Activated naive CD4-positive, alpha-beta T cell treated with anti-CD3 and anti-CD28 coated beads for 36 hours (primary cell): ENCODE measurements at regions of chr12 and their contacts with region 1.

Region 1: DNA sequence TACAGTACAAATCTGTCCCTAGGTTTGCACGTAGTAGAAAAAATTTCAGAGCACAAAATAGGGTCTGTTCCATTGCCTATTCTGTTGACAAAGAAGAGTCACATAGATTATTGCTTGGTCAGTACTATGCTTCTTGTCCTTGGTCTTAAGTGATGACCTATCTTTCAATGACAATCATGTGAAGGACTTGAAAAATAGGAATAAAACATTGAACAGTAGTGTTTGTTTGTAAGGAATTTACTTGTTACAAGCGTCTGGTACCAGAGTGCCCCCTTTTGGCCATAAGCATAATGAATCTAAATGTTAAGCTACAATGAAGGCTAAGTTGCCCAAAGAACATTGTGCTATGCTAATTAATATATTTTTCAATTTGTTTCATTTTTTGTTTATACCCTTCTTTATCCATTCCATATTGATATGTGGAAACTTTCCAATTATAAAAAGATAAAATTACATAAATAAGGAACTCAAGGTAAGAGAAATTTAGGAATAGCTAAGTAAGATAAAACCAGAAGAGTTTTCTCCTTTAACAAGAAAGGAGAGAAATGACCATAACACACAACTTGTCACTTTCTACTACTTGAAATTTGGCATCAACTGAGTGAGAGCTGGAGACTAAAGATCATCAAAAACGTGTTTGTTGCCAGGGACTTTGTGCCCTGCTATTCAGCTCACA is 204.7 kb downstream of the EPS8 start:
- DNase-seq: peak; percentile 58
- H3K4me3 Mint-ChIP-seq: no peak overlapping the region
- H3K27ac Mint-ChIP-seq: no peak overlapping the region
- H3K4me1 Mint-ChIP-seq: peaks cover 12% of the 10 kb centered on the region
- H3K27me3 Mint-ChIP-seq: no peaks in the 10 kb centered on the region

Region 2: GRCh38 chr12:15227004-15227679 is 357.4 kb before region 1 on chr12:
- CTCF ChIA-PET with region 1: no interaction called
- intact Hi-C with region 1: loop called (anchors 2 kb)
- DNase-seq: peak; percentile 56
- H3K4me3 Mint-ChIP-seq: no peak overlapping the region
- H3K27ac Mint-ChIP-seq: no peak overlapping the region
- H3K4me1 Mint-ChIP-seq: no peaks in the 10 kb centered on the region
- H3K27me3 Mint-ChIP-seq: peaks cover 18% of the 10 kb centered on the region

Region 3: DNA sequence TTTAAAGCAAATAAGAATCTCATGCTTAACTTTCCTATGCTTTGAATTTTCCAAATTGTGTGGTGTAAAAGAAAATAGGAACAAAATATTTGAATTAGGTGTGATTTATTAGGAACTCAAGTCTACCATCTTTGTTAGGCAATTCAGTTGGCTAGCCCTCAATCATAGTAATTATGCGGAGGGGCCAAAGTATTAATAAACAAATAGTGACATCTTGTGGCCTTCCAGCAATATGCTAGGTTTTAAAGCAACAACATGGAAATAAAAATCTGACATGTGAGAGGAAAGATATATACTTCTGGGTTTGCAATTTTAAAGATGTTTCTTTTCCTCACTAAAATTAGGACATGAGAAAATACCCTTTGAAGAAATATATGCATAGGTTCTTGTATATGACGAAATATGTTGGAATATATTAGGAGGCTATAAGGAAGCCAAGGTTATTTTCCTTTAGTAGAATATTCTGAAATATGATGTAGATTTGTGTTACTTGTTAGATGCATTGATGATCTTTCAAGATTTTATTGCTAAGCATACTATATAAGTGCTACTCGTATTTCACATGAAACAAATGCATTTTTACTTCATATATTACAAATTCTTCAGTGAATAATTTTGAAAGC is 61.8 kb before region 1 on chr12:
- CTCF ChIA-PET with region 1: interaction called, 460 read pairs
- intact Hi-C with region 1: no loop called
- DNase-seq: no peak
- H3K4me3 Mint-ChIP-seq: no peak overlapping the region
- H3K27ac Mint-ChIP-seq: no peak overlapping the region
- H3K4me1 Mint-ChIP-seq: peaks cover 4% of the 10 kb centered on the region
- H3K27me3 Mint-ChIP-seq: peaks cover 14% of the 10 kb centered on the region

Region 4: DNA sequence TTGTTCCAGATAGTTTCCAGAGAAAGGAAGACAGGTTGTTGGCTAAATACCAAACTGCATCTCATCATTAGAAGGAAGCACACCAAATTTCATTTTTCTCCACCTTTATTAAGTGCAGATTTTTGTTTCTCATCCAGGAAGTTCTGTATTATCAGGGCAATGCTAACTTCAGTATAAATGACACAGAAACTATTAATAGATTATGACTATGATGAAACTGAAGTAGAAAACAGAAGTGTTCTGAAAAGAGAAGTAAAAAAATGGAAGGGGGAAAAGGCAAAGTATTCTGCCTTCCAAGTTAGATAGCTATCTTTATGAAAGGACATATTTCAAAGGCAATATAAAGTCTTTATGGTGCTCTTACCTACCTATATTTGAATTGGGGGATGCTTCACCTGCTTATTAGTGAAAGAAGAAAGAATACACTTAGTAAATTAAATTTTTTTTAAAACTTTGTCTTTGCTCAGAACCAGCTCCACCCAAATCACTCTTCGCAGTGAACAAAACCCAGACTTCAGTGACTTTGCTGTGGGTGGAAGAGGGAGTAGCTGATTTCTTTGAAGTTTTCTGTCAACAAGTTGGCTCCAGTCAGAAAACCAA is 38.3 kb before region 1 on chr12:
- CTCF ChIA-PET with region 1: interaction called, 13 read pairs
- intact Hi-C with region 1: no loop called
- DNase-seq: peak; percentile 38
- H3K4me3 Mint-ChIP-seq: no peak overlapping the region
- H3K27ac Mint-ChIP-seq: peak overlapping the region; percentile 79
- H3K4me1 Mint-ChIP-seq: peaks cover 64% of the 10 kb centered on the region
- H3K27me3 Mint-ChIP-seq: no peaks in the 10 kb centered on the region

Region 5: GRCh38 chr12:15563663-15564062 is 20.8 kb before region 1 on chr12:
- CTCF ChIA-PET with region 1: interaction called, 21 read pairs
- intact Hi-C with region 1: no loop called
- DNase-seq: peak; percentile 67
- H3K4me3 Mint-ChIP-seq: peak overlapping the region; percentile 58
- H3K27ac Mint-ChIP-seq: peak overlapping the region; percentile 90
- H3K4me1 Mint-ChIP-seq: peaks cover 81% of the 10 kb centered on the region
- H3K27me3 Mint-ChIP-seq: no peaks in the 10 kb centered on the region

Region 6: GRCh38 chr12:15682826-15683225 is 98.3 kb after region 1 on chr12:
- CTCF ChIA-PET with region 1: no interaction called
- intact Hi-C with region 1: no loop called
- DNase-seq: no peak
- H3K4me3 Mint-ChIP-seq: no peak overlapping the region
- H3K27ac Mint-ChIP-seq: no peak overlapping the region
- H3K4me1 Mint-ChIP-seq: no peaks in the 10 kb centered on the region
- H3K27me3 Mint-ChIP-seq: no peaks in the 10 kb centered on the region

Region 7: GRCh38 chr12:15856097-15856982 is 271.8 kb after region 1 on chr12:
- CTCF ChIA-PET with region 1: interaction called, 76 read pairs
- intact Hi-C with region 1: no loop called
- DNase-seq: peak; percentile 66
- H3K4me3 Mint-ChIP-seq: no peak overlapping the region
- H3K27ac Mint-ChIP-seq: no peak overlapping the region
- H3K4me1 Mint-ChIP-seq: no peaks in the 10 kb centered on the region
- H3K27me3 Mint-ChIP-seq: peaks cover 3% of the 10 kb centered on the region

Region 8: DNA sequence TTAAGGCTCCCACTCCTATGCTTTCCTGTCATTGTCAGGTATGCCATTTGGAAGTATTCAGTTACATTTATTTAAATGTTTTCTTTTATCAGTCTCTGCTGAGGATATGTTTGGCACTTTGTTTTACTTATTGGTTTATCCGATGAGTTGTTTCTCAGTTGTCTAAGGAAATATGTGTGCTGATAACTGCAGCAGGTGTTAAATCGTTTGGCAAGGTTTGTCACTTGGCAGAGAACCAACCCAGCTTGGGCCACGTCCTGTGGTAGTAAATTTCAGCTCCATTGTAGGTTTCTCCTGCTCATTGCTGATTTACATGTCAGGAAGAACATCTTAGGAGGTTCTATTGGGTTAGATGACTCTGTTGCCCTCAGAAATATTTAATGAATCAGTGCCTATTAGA is 740.9 kb after region 1 on chr12:
- CTCF ChIA-PET with region 1: no interaction called
- intact Hi-C with region 1: no loop called
- DNase-seq: no peak
- H3K4me3 Mint-ChIP-seq: no peak overlapping the region
- H3K27ac Mint-ChIP-seq: no peak overlapping the region
- H3K4me1 Mint-ChIP-seq: no peaks in the 10 kb centered on the region
- H3K27me3 Mint-ChIP-seq: no peaks in the 10 kb centered on the region